ENCODE measurements at regions of chr5 and their contacts with region 1.

Region 1: DNA sequence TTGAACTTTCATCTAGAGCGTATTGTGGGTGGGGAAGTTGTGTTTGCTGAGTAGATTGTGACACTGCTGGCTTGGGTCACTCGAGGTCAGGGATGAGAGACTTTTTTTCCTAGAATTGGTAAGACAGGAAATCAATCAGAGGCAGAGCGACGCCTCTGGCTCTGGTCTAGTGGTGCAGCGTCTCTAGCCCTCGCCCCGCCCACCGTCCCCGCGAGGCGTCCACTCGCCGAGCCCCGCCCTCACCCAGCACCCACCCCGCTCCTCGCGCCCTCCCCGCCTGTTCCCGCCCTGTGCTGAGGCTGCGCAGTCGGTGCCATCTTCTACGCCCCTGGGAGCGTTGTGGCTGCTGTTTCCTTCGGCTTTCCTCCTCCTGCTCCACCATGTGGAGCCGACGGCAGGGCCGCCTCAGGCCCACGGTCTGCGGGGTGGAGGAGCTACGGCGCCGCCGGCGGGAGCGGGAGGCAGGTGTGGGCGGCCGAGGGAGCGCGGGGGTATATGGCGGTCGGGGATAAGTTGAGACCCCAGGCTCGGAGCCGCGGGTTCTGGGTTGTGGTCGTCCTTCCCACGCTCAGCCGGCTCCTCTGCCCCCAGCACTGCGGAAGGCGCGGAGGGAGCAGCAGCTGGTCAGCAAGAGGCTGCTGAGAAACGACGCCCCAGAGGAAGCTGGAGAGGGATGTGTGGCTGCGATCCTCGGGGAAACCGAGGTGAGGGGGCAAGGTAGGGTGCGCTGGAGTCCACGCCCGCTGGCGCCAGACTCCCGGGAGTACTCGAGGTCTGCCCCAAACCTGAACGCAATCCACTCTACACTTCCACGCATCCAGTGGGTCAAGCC is at the start of gene TMCO6:
- DNase-seq: peak; percentile 99
- ATAC-seq: peak; percentile 99
- H3K4me3 ChIP-seq: peak within 1 kb of the TSS; percentile 53
- H3K27ac ChIP-seq: peak within 1 kb of the TSS; percentile 94
- H3K4me1 ChIP-seq: peaks cover 3% of the 10 kb centered on the region
- H3K27me3 ChIP-seq: no peaks in the 10 kb centered on the region
- total RNA-seq, gene TMCO6: 4.3 to 5.0 (median 4.8) TPM

Region 2: GRCh38 chr5:140547508-140548299 is 91.7 kb before region 1 on chr5 and contains the start of gene EIF4EBP3:
- intact Hi-C with region 1: loop called in 1 of 4 experiments (anchors 5 kb)
- DNase-seq: peak; percentile 98 to 99 (median 99)
- ATAC-seq: peak; percentile 95 to 96
- H3K4me3 ChIP-seq: peak within 1 kb of the TSS; percentile 56
- H3K27ac ChIP-seq: peak within 1 kb of the TSS; percentile 98
- H3K4me1 ChIP-seq: peaks cover 21% of the 10 kb centered on the region
- H3K27me3 ChIP-seq: no peaks in the 10 kb centered on the region
- total RNA-seq, gene EIF4EBP3: 11.2 to 24.0 (median 13.2) TPM

Region 3: DNA sequence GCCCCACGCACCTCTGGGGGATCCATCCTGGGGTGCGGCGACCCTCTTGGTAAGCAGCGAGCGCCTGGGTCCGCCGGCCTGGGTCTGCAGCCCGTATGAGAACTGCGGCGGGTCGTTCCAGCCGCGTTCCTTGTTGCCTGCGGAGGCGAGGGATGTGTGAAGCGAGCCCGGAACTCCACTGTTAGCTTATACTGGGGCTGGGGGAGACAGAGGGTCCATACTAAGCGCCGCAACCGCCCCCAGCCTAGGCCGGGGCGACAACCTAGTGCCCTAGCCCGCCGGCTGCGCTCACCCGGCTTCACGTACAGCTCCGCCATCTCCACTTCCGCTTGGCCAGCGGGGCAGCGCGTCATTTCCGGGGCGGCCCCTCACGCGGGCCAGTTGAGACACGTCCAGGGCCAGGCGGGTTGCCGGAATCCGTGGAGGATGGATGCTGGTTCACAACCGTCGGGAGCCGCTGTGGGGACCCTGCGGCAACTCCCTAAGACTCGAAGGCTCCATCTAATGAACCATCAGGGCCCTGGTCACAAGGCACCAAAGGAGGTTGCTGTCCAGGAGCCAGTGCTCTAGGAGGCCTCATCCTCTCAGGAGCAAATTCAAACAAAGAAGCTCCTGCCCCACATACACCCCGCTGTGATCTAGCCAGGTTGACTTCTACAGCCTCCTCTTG is 82.1 kb before region 1 on chr5 and contains the start of gene SRA1:
- intact Hi-C with region 1: loop called in 3 of 4 experiments (anchors 5 to 10 kb)
- DNase-seq: peak; percentile 93 to 97 (median 97)
- ATAC-seq: peak; percentile 96
- H3K4me3 ChIP-seq: peak within 1 kb of the TSS; percentile 83
- H3K27ac ChIP-seq: peak within 1 kb of the TSS; percentile 92
- H3K4me1 ChIP-seq: peaks cover 8% of the 10 kb centered on the region
- H3K27me3 ChIP-seq: no peaks in the 10 kb centered on the region
- total RNA-seq, gene SRA1: 25.9 to 32.7 (median 28.2) TPM

Region 4: DNA sequence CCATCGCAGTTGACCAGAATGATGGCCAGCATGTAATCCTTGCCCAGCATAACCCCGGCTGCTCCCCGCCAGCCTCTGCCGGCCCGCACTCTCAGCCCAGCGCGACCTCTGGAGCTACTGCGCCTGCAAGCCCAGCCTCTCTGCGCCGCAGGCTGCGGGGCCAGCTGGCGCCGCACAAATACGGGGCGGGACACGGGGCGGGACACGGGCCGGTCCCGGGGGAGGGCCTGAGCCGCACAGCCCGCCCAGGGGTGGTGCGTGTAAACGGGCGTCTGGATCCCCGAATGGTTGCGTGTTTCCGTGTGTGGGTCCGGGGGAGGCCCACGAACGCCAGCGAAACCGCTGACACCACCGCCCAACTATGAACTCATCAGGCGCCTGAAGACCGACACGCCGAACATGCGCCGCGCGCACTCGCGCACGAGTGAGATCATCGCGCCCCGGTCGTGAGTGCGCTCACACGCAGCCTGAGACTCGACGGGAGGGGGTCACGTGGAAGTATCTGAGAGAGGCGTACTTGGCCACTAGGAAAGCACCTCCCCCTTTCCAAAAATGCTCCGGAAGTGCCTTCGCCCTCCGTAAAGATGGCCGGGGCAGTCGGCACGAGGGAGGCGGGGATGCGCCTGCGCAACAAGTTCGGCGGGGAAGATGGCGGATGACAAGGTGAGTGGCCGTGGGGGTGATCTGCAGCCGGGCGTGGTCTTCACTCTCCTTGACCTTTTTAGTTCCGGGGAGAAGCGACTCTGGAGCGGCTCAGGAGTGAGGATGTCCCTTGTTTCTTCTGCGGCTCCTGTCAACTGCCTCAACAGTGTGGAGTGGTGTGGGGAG is 75.0 kb before region 1 on chr5 and contains the starts of genes APBB3 and SLC35A4:
- intact Hi-C with region 1: loop called in 3 of 4 experiments (anchors 5 to 10 kb)
- DNase-seq: peak; percentile 98
- ATAC-seq: peak; percentile 94 to 96
- H3K4me3 ChIP-seq: peak within 1 kb of the TSS; percentile 58
- H3K27ac ChIP-seq: peak within 1 kb of the TSS; percentile 84
- H3K4me1 ChIP-seq: peaks cover 14% of the 10 kb centered on the region
- H3K27me3 ChIP-seq: no peaks in the 10 kb centered on the region
- total RNA-seq, gene APBB3: 13.2 to 19.2 (median 16.0) TPM
- total RNA-seq, gene SLC35A4: 58.2 to 77.3 (median 71.0) TPM

Region 5: GRCh38 chr5:140611020-140611521 is 28.3 kb before region 1 on chr5:
- intact Hi-C with region 1: no loop called
- DNase-seq: peak in 1 of 3 donors; percentile 54
- ATAC-seq: peak; percentile 23 to 62
- H3K4me3 ChIP-seq: no peak overlapping the region
- H3K27ac ChIP-seq: no peak overlapping the region
- H3K4me1 ChIP-seq: no peaks in the 10 kb centered on the region
- H3K27me3 ChIP-seq: no peaks in the 10 kb centered on the region